ENCODE measurements at regions of chr5 and their contacts with region 1.

Region 1: GRCh38 chr5:137629646-137630045 is 106.2 kb downstream of the KLHL3 start:
- DNase-seq: no peak
- ATAC-seq: peak; percentile 66 to 77
- H3K4me3 ChIP-seq: no peak overlapping the region
- H3K27ac ChIP-seq: no peak overlapping the region
- H3K4me1 ChIP-seq: peaks cover 11 to 29% of the 10 kb centered on the region in 2 donors
- H3K27me3 ChIP-seq: no peaks in the 10 kb centered on the region
- CTCF ChIP-seq: peak; percentile 87 to 93 (median 91)
- POLR2A ChIP-seq: no peak

Region 2: GRCh38 chr5:137660349-137660817 is 30.7 kb after region 1 on chr5:
- in situ Hi-C with region 1: no loop called
- intact Hi-C with region 1: loop called (anchors 1 kb)
- DNase-seq: peak; percentile 19 to 51
- ATAC-seq: peak; percentile 84 to 85
- H3K4me3 ChIP-seq: no peak overlapping the region
- H3K27ac ChIP-seq: no peak overlapping the region
- H3K4me1 ChIP-seq: no peaks in the 10 kb centered on the region
- H3K27me3 ChIP-seq: no peaks in the 10 kb centered on the region
- CTCF ChIP-seq: peak; percentile 20 to 80 (median 72)
- POLR2A ChIP-seq: no peak

Region 3: DNA sequence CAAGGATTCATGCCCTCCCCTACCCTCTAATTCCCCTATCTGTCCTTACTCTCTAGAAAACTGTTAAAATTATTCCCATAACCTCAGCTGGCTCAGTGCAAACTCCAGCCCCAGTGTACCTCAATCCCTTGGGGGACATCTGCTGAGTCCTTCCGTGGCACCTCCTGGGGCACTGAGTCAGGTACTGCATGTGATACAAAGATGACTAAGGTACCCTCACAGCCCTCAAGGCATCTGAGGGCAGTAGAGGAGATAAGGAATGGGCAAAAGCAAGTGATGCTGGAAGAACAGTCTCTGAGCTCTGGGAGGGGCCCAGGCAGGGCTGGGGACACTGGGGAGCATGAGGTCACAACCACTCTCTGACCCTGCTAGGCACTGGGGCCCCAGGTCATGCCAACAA is 43.9 kb after region 1 on chr5:
- in situ Hi-C with region 1: no loop called
- intact Hi-C with region 1: no loop called
- DNase-seq: no peak
- ATAC-seq: no peak
- H3K4me3 ChIP-seq: no peak overlapping the region
- H3K27ac ChIP-seq: no peak overlapping the region
- H3K4me1 ChIP-seq: no peaks in the 10 kb centered on the region
- H3K27me3 ChIP-seq: no peaks in the 10 kb centered on the region
- CTCF ChIP-seq: no peak
- POLR2A ChIP-seq: no peak

Region 4: GRCh38 chr5:137743031-137743640 is 113.5 kb after region 1 on chr5:
- in situ Hi-C with region 1: loop called in 2 of 4 experiments (anchors 5 to 10 kb)
- intact Hi-C with region 1: loop called (anchors 1 kb)
- DNase-seq: peak in 1 of 2 donors; percentile 23
- ATAC-seq: peak; percentile 76 to 86
- H3K4me3 ChIP-seq: no peak overlapping the region
- H3K27ac ChIP-seq: no peak overlapping the region
- H3K4me1 ChIP-seq: peaks cover 3 to 4% of the 10 kb centered on the region in 2 donors
- H3K27me3 ChIP-seq: no peaks in the 10 kb centered on the region
- CTCF ChIP-seq: peak; percentile 41 to 70 (median 56)
- POLR2A ChIP-seq: no peak

Region 5: DNA sequence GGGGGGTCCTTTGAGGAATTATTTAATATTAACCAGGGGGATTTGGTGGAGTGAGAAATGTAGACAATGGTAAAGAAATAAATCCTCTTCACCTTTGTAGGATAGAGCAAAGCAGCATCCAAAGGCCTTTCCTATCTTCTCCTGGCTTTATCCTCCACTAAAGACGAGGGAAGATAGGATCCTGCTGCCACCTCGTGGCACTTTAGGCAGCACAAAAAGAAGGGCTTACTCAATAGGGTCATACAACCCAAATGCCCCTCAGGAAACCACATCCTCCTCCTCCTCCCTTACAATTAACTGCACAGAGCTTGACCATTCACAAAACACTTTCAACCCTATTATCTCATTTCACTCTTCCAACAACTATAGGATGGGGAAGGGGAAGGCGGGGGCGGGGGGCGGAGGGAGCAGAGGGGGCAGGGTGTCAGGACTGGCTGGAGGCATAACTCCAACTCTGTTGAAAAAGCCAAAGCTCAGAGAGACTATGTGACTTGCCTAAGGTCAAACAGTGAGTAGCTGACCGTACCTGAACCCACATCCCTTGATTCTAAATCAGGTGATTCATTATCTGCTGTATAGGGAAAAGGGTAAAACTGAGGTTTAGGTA is 192.6 kb after region 1 on chr5:
- in situ Hi-C with region 1: loop called in 1 of 4 experiments (anchors 10 kb)
- intact Hi-C with region 1: loop called (anchors 5 kb)
- DNase-seq: peak; percentile 18 to 55
- ATAC-seq: peak; percentile 79 to 90
- H3K4me3 ChIP-seq: no peak overlapping the region
- H3K27ac ChIP-seq: peak overlapping the region; percentile 17 to 54 (median 32)
- H3K4me1 ChIP-seq: peaks cover 8 to 9% of the 10 kb centered on the region in 2 donors
- H3K27me3 ChIP-seq: no peaks in the 10 kb centered on the region
- CTCF ChIP-seq: peak; percentile 32 to 66 (median 53)
- POLR2A ChIP-seq: no peak

Region 6: DNA sequence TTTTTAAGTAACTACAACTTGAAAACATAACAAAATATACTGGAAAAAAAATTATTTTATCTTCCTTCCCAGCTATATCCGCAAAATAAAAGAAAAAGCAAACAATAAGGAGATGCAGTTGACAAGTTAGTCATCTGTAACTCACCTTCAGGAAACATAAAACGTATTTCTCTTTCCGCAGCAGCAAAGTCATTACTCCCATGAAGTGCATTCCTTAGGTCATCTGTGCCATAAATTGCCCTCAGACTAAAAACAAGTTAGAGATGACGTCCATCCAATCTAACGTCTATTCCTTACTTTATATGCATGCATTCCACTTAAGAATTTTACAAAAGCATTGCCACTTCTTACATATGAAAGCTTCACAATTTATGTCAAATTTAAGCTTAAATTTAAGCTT is 498.7 kb after region 1 on chr5:
- in situ Hi-C with region 1: loop called in 1 of 4 experiments (anchors 25 kb)
- intact Hi-C with region 1: loop called (anchors 2 kb)
- DNase-seq: no peak
- ATAC-seq: no peak
- H3K4me3 ChIP-seq: no peak overlapping the region
- H3K27ac ChIP-seq: no peak overlapping the region
- H3K4me1 ChIP-seq: no peaks in the 10 kb centered on the region
- H3K27me3 ChIP-seq: no peaks in the 10 kb centered on the region
- CTCF ChIP-seq: no peak
- POLR2A ChIP-seq: no peak

Region 7: DNA sequence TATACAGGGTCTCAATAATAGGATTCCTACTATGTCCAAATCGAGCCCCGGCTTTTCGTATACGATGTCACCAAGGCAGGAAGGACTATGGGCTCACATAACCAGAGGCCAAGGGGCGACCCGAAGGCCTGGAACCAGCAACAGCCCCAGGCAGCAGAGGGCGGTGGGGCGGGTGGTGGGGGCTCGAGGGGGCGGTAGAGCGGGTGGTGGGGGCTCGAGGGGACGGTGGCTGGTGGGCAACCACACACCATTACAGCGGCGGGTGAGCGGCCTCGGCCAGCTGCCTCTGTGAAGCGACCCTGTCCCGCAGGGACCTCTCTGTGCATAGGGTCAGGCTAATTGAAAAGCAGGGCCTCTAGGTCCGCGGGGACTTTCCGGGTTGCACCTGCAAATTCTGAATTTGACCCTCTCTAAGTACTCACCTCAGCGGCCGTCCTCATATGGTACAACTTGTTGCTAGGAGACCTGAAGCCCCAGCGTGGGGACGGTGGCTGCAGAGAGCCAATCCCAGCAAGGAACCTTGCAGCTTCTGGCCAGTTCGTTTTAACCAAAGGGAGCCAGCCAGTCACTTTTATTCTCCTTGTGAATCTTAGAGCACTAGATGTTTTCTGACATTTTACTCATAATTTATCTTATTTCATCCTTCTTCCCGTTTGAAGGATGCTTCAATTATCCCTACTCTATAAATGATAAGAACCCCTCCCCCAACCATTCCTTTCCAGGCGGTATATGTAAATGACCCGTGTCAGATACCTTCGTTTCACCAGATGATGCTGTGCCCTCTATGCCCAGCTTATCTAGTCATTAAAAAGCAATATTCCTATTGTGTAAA is 509.5 kb after region 1 on chr5 and contains the start of gene NME5:
- in situ Hi-C with region 1: loop called in 1 of 4 experiments (anchors 25 kb)
- intact Hi-C with region 1: no loop called
- DNase-seq: peak; percentile 20 to 31
- ATAC-seq: peak; percentile 66 to 74
- H3K4me3 ChIP-seq: peak within 1 kb of the TSS; percentile 50 to 57 (median 56)
- H3K27ac ChIP-seq: no peak within 1 kb of the TSS
- H3K4me1 ChIP-seq: peaks cover 0 to 7% of the 10 kb centered on the region in 2 donors
- H3K27me3 ChIP-seq: no peaks in the 10 kb centered on the region
- CTCF ChIP-seq: no peak
- POLR2A ChIP-seq: no peak
- total RNA-seq, gene NME5: 0.51 TPM in 2 of 4 donors, not detected in the others

Region 8: GRCh38 chr5:138331449-138332368 is 702.1 kb after region 1 on chr5 and contains the start of gene CDC25C:
- in situ Hi-C with region 1: no loop called
- intact Hi-C with region 1: loop called (anchors 10 kb)
- DNase-seq: peak; percentile 98 to 99
- ATAC-seq: peak; percentile 99 to 100
- H3K4me3 ChIP-seq: peak within 1 kb of the TSS; percentile 57 to 70 (median 60)
- H3K27ac ChIP-seq: peak within 1 kb of the TSS; percentile 38 to 63 (median 58)
- H3K4me1 ChIP-seq: peaks cover 10 to 13% of the 10 kb centered on the region in 2 donors
- H3K27me3 ChIP-seq: no peaks in the 10 kb centered on the region
- CTCF ChIP-seq: no peak
- POLR2A ChIP-seq: no peak
- total RNA-seq, gene CDC25C: not detected